ENCODE measurements at regions of chr9 and their contacts with region 1.

Region 1: GRCh38 chr9:127586537-127586936 is 25.5 kb upstream of the STXBP1 start:
- DNase-seq: peak; percentile 76
- H3K4me3 ChIP-seq: no peak overlapping the region
- H3K27ac ChIP-seq: no peak overlapping the region
- H3K4me1 ChIP-seq: no peaks in the 10 kb centered on the region
- H3K27me3 ChIP-seq: no peaks in the 10 kb centered on the region
- CTCF ChIP-seq: peak; percentile 84

Region 2: GRCh38 chr9:127503947-127504782 is 82.4 kb before region 1 on chr9:
- CTCF ChIA-PET with region 1: interaction called, 5 read pairs
- POLR2A ChIA-PET with region 1: no interaction called
- intact Hi-C with region 1: loop called (anchors 1 kb)
- DNase-seq: peak; percentile 79
- H3K4me3 ChIP-seq: no peak overlapping the region
- H3K27ac ChIP-seq: no peak overlapping the region
- H3K4me1 ChIP-seq: no peaks in the 10 kb centered on the region
- H3K27me3 ChIP-seq: no peaks in the 10 kb centered on the region
- CTCF ChIP-seq: peak; percentile 91

Region 3: GRCh38 chr9:127734747-127735529 is 148.4 kb after region 1 on chr9 and contains the start of gene TOR2A:
- CTCF ChIA-PET with region 1: interaction called, 17 read pairs
- POLR2A ChIA-PET with region 1: no interaction called
- intact Hi-C with region 1: loop called (anchors 1 kb)
- DNase-seq: peak; percentile 99
- H3K4me3 ChIP-seq: peak within 1 kb of the TSS; percentile 69
- H3K27ac ChIP-seq: peak within 1 kb of the TSS; percentile 83
- H3K4me1 ChIP-seq: peaks cover 10% of the 10 kb centered on the region
- H3K27me3 ChIP-seq: no peaks in the 10 kb centered on the region
- CTCF ChIP-seq: peak; percentile 98
- total RNA-seq, gene TOR2A: 9.1 and 9.2 TPM in 2 replicates

Region 4: DNA sequence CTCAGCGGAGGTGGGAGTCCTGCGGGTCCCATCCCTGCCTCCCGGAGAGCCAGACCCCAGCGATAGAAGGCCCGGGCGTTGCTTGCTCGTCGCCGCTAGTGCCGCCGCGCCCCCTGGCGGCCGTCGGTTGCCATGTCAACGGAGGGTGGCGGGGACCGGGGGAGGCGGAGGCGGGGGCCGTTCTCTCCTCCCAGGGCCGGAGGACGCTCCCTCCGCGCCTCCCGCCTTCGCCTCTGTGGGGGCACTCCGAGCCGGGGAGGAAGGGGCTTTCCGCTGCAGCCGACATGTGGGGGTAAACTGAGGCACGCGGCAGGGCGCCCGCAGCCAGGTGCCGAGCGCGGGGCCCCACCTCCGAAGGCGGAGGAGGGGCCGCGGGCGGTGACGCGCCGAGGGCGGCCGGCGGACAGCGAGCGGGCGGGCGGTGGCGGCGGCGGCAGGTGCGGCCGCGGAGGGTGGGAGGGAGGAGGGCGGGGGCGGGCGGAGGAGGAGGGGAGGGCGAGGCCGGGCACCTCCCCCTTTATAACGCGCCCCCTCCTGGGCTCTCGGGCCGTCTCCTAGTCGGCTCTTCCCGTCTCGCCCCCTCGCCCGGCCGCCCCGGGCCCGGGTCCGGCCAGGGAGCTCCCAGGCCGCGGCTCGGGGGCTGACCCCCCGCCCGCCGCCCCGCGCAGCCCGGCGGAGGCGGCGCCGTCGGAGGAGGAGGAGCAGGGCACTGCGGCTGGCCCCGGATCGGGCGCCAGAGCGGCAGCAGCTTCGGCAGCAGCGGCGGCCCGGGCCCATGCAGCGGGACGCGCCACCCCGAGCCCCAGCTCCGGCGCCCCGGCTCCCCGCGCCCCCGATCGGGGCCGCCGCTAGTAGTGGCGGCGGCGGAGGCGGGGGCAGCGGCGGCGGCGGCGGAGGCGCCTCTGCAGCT is 198.7 kb after region 1 on chr9:
- CTCF ChIA-PET with region 1: no interaction called
- POLR2A ChIA-PET with region 1: no interaction called
- intact Hi-C with region 1: loop called (anchors 2 kb)
- DNase-seq: peak; percentile 90
- H3K4me3 ChIP-seq: peak overlapping the region; percentile 77
- H3K27ac ChIP-seq: peak overlapping the region; percentile 93
- H3K4me1 ChIP-seq: peaks cover 6% of the 10 kb centered on the region
- H3K27me3 ChIP-seq: no peaks in the 10 kb centered on the region
- CTCF ChIP-seq: peak; percentile 94

Region 5: GRCh38 chr9:127928664-127929021 is 342.1 kb after region 1 on chr9:
- CTCF ChIA-PET with region 1: no interaction called
- POLR2A ChIA-PET with region 1: interaction called, 14 read pairs
- intact Hi-C with region 1: no loop called
- DNase-seq: no peak
- H3K4me3 ChIP-seq: no peak overlapping the region
- H3K27ac ChIP-seq: no peak overlapping the region
- H3K4me1 ChIP-seq: peaks cover 10% of the 10 kb centered on the region
- H3K27me3 ChIP-seq: no peaks in the 10 kb centered on the region
- CTCF ChIP-seq: no peak

Measured in A673 (cell line).